IMR-90 (cell line): ENCODE measurements at regions of chr14 and their contacts with region 1.

Region 1: DNA sequence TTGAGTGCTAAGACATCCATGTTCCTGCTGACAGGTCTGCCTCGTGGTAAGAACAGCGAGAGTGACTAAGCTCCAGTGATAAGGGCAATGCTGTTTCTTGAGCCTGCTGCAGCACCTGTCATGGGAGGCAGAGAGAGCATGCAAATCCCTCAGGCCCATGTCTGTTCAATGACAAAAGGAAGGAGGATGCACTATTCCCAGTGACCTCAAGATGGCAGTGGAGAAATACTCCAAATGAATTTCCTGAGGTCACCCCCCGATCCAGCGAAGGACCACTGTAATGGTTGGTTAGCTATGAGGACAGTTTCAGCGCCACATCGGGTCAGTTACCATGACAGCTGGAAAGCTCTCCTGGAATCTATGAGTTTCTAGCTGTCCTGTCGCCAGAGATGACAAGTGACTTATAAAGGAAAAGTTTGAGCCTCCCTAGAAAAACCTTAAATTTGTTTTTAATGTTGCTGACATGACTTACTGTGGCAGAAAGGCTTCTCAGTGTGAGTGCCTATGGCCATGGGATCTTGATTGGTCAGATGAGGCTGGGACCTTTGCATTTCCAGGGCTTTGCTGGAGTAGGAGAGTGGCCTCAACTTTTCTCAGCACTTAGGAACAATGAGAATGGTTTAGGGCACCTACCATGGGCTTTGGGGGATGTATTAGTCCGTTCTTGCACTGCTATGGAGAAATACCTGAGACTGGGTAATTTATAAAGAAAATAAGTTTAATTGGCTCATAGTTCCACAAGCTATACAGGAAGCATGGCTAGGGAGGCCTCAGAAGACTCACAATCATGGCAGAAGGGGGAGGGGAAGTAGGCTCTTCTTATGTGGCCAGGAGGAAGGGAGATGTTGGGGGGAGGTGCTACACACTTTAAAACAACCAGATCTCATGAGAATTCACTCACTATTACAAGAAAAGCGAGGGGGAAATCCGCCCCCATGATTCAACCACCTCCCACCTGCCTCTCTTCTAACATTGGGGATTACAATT is 88.0 kb upstream of the TMEM260 start:
- DNase-seq: peak; percentile 49
- ATAC-seq: peak; percentile 81
- H3K4me3 ChIP-seq: peak overlapping the region; percentile 9; the same call in 1 of the 2 replicates
- H3K27ac ChIP-seq: no peak overlapping the region
- H3K4me1 ChIP-seq: no peaks in the 10 kb centered on the region
- H3K27me3 ChIP-seq: peaks cover 5% of the 10 kb centered on the region
- CTCF ChIP-seq: peak; percentile 71
- POLR2A ChIP-seq: no peak
- RAD21 ChIP-seq: peak; percentile 58

Region 2: DNA sequence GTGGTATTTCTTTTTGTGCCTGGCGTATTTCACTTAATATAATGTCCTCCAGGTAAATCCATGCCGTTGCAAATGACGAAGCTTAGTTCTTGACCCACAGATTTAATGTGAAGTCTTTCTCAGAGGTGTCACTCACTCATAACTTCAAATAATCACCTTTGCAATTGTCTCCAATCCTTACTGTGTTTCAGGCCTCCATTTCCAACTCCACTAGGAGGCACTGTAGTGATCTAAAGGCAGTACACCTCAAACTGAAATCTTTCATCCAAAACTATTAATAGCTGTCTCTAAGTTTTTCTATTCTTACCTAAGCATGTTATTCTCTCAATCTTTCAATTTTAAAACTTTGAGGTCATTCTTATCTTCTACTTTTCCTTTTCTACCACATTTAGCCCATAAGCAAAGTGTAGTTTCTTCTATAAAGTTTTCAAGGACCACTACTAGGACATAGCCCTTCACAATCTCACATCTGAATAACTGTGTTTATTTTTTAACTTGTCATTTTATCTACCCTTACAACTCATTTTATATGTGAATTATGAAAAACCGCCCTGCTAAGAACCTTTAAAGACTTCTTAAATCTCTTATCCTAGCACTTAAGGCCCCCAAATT is 1245.8 kb before region 1 on chr14:
- CTCF ChIA-PET with region 1: no interaction called
- POLR2A ChIA-PET with region 1: no interaction called
- dilution Hi-C with region 1: no loop called
- in situ Hi-C with region 1: loop called (anchors 25 kb)
- intact Hi-C with region 1: no loop called
- DNase-seq: peak; percentile 42
- ATAC-seq: 0 out of 2 replicates have a peak, but pooled peaks have one; percentile 35
- H3K4me3 ChIP-seq: no peak overlapping the region
- H3K27ac ChIP-seq: no peak overlapping the region
- H3K4me1 ChIP-seq: peaks cover 2% of the 10 kb centered on the region; the same call in 1 of the 2 replicates
- H3K27me3 ChIP-seq: peaks cover 24% of the 10 kb centered on the region
- CTCF ChIP-seq: peak; percentile 64
- POLR2A ChIP-seq: no peak
- RAD21 ChIP-seq: peak; percentile 59

Region 3: GRCh38 chr14:55446218-55446654 is 1045.4 kb before region 1 on chr14:
- CTCF ChIA-PET with region 1: no interaction called
- POLR2A ChIA-PET with region 1: no interaction called
- dilution Hi-C with region 1: no loop called
- in situ Hi-C with region 1: loop called (anchors 5 kb)
- intact Hi-C with region 1: loop called (anchors 2 kb)
- DNase-seq: peak; percentile 86
- ATAC-seq: peak; percentile 38
- H3K4me3 ChIP-seq: no peak overlapping the region
- H3K27ac ChIP-seq: no peak overlapping the region
- H3K4me1 ChIP-seq: peaks cover 8% of the 10 kb centered on the region
- H3K27me3 ChIP-seq: no peaks in the 10 kb centered on the region
- CTCF ChIP-seq: peak; percentile 72
- POLR2A ChIP-seq: no peak; the same call in 1 of the 2 replicates
- RAD21 ChIP-seq: peak; percentile 75

Region 4: GRCh38 chr14:57066887-57067513 is 575.4 kb after region 1 on chr14:
- CTCF ChIA-PET with region 1: no interaction called
- POLR2A ChIA-PET with region 1: no interaction called
- dilution Hi-C with region 1: no loop called
- in situ Hi-C with region 1: no loop called
- intact Hi-C with region 1: loop called (anchors 2 kb)
- DNase-seq: peak; percentile 2
- ATAC-seq: peak; percentile 60
- H3K4me3 ChIP-seq: no peak overlapping the region
- H3K27ac ChIP-seq: no peak overlapping the region
- H3K4me1 ChIP-seq: no peaks in the 10 kb centered on the region
- H3K27me3 ChIP-seq: peaks cover 1% of the 10 kb centered on the region; the same call in 1 of the 2 replicates
- CTCF ChIP-seq: peak; percentile 44
- POLR2A ChIP-seq: no peak
- RAD21 ChIP-seq: peak; percentile 51

Region 5: DNA sequence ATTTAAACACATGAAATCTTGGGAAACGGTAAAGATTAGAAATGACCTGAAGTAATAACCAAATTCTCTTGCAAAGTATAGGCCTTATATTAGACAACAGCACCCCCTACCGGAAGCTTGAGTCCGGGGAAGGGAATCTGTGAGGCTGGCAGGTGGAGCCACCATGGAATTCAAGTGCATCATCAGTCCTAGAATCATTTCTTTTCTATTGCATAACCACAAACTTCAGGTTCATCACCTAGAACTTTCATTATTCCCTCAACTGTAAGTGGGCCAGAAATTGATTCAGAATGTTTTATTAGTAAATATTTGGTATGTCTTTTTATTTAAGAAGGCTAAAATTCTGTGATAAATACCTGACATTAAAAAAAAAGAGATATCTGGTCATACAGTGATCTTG is 825.7 kb after region 1 on chr14:
- CTCF ChIA-PET with region 1: interaction called, 10 read pairs
- POLR2A ChIA-PET with region 1: no interaction called
- dilution Hi-C with region 1: loop called (anchors 10 kb)
- in situ Hi-C with region 1: loop called (anchors 5 kb)
- intact Hi-C with region 1: loop called (anchors 1 kb)
- DNase-seq: peak; percentile 78
- ATAC-seq: peak; percentile 85
- H3K4me3 ChIP-seq: no peak overlapping the region
- H3K27ac ChIP-seq: no peak overlapping the region
- H3K4me1 ChIP-seq: no peaks in the 10 kb centered on the region
- H3K27me3 ChIP-seq: peaks cover 7% of the 10 kb centered on the region
- CTCF ChIP-seq: peak; percentile 93
- POLR2A ChIP-seq: no peak
- RAD21 ChIP-seq: peak; percentile 85